ENCODE measurements at regions of chr6 and their contacts with region 1.

Region 1: DNA sequence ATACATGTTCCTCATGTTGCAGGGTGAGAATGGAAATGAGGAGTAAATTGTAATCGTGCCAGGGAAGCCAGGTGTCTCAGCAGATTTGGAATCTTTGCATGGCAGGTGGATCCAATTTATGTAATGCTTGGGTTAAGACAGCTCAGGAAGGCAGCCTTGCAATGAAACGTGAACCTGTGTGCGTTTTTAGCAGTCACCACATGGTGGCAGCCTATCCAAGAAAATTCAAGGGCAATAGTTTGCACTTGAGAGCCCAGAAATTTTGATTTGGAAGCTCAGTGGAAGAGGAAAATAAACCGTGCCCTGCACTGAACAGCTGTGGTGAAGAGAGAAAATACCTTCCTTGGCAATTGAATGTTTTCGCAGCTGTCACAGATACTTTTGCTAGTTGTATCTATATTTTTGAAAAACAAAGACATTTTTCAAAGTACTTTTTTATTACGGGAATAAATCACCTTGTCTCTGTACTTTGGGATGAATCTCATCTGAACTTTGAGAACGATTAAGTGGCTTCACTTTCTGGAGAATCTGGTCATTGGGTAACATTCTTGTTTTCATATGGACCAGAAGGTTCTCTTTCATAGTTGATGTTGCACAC is 26.5 kb downstream of the MTHFD1L start:
- DNase-seq: peak; percentile 77
- H3K4me3 ChIP-seq: no peak overlapping the region
- H3K27ac ChIP-seq: no peak overlapping the region
- H3K4me1 ChIP-seq: peaks cover 0 to 7% (median 2%) of the 10 kb centered on the region in 4 donors
- H3K27me3 ChIP-seq: no peaks in the 10 kb centered on the region
- CTCF ChIP-seq: peak; percentile 73 to 88 (median 85)
- EP300 ChIP-seq: no peak
- POLR2A ChIP-seq: no peak

Region 2: GRCh38 chr6:151014404-151015100 is 122.6 kb after region 1 on chr6:
- in situ Hi-C with region 1: loop called in 1 of 4 experiments (anchors 25 kb)
- intact Hi-C with region 1: no loop called
- DNase-seq: peak; percentile 78
- H3K4me3 ChIP-seq: no peak overlapping the region
- H3K27ac ChIP-seq: peak overlapping the region in 3 of 4 donors; percentile 4 to 45 (median 5)
- H3K4me1 ChIP-seq: peaks cover 0 to 5% (median 2%) of the 10 kb centered on the region in 4 donors
- H3K27me3 ChIP-seq: no peaks in the 10 kb centered on the region
- CTCF ChIP-seq: peak; percentile 96 to 99 (median 98)
- EP300 ChIP-seq: no peak
- POLR2A ChIP-seq: no peak

Region 3: GRCh38 chr6:151060096-151060765 is 168.2 kb after region 1 on chr6:
- in situ Hi-C with region 1: no loop called
- intact Hi-C with region 1: no loop called
- DNase-seq: no peak
- H3K4me3 ChIP-seq: no peak overlapping the region
- H3K27ac ChIP-seq: peak overlapping the region; percentile 32 to 52 (median 42)
- H3K4me1 ChIP-seq: peaks cover 0 to 3% (median 1%) of the 10 kb centered on the region in 4 donors
- H3K27me3 ChIP-seq: no peaks in the 10 kb centered on the region
- CTCF ChIP-seq: no peak
- EP300 ChIP-seq: no peak
- POLR2A ChIP-seq: no peak

Region 4: DNA sequence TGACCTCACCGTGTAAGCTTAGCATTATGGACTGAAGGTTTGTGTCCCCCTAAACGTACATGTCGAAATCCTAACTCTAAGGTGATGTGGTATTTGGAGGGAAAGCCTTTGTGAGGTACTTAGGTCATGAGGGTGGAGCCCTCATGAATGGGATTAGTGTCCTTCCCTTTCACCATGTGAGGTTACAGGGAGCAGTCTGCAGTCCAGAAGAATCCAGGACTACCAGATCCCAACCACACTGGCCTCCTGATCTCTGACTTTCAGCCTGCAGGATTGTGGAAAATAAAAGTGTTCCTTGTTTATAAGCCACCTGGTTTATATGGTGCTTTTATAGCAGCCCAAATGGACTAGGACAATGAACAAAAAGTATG is 426.0 kb after region 1 on chr6:
- in situ Hi-C with region 1: no loop called
- intact Hi-C with region 1: no loop called
- DNase-seq: no peak
- H3K4me3 ChIP-seq: no peak overlapping the region
- H3K27ac ChIP-seq: peak overlapping the region; percentile 64 to 81 (median 73)
- H3K4me1 ChIP-seq: peaks cover 0 to 4% (median 0%) of the 10 kb centered on the region in 4 donors
- H3K27me3 ChIP-seq: no peaks in the 10 kb centered on the region
- CTCF ChIP-seq: no peak
- EP300 ChIP-seq: no peak
- POLR2A ChIP-seq: no peak

Region 5: DNA sequence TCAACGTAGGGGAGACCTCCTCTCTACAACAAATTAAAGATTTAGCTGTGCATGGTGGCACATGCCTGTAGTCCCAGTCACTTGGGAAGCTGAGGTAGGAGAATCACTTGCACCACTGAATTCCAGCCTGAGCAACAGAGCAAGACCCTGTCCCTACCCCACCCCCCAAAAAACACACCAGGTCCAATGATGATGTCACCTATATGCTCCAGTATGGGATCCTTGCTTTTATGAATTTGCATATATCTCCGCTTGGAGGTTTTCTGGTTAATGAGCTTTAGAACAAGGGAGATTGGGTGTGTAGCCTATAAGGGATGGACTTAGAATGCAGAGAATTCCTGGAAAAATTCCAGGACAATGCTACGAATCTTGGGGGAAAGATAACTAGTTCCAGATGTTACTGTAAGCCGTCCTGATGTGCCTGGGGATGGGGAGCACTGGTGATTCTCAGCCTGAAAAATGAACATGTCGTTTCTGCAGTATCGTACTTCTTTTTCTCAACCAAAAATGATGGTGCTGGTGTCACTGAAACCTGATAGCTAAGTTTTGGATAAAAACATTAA is 438.2 kb after region 1 on chr6:
- in situ Hi-C with region 1: loop called (anchors 5 to 10 kb)
- intact Hi-C with region 1: loop called (anchors 5 kb)
- DNase-seq: no peak
- H3K4me3 ChIP-seq: no peak overlapping the region
- H3K27ac ChIP-seq: peak overlapping the region in 2 of 4 donors; percentile 13 to 41
- H3K4me1 ChIP-seq: peaks cover 3 to 8% (median 8%) of the 10 kb centered on the region in 4 donors
- H3K27me3 ChIP-seq: peaks cover 18% of the 10 kb centered on the region
- CTCF ChIP-seq: no peak
- EP300 ChIP-seq: no peak
- POLR2A ChIP-seq: no peak

Region 6: GRCh38 chr6:151339369-151339768 is 447.4 kb after region 1 on chr6:
- in situ Hi-C with region 1: loop called (anchors 5 to 10 kb)
- intact Hi-C with region 1: loop called (anchors 5 kb)
- DNase-seq: no peak
- H3K4me3 ChIP-seq: no peak overlapping the region
- H3K27ac ChIP-seq: no peak overlapping the region
- H3K4me1 ChIP-seq: peaks cover 0 to 5% (median 0%) of the 10 kb centered on the region in 4 donors
- H3K27me3 ChIP-seq: no peaks in the 10 kb centered on the region
- CTCF ChIP-seq: no peak
- EP300 ChIP-seq: no peak
- POLR2A ChIP-seq: no peak

Region 7: DNA sequence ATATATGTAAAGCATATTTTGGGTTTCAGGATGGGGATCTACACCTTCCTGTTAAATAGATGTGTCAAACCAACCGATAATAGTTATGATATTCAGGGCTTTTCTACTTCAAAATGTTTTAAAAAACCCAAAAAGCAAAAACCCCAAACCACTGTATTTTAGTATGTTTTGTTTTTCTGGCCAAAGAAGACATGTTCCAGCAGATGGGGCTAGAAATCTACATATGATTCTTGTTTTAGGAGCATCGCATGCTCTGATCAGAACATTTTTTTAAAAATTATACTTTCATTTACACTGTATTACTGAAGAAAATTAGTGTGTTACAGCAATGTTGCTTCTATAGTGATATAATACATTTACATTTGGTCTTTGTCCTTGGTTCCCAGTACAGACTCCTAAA is 548.9 kb after region 1 on chr6:
- in situ Hi-C with region 1: no loop called
- intact Hi-C with region 1: no loop called
- DNase-seq: no peak
- H3K4me3 ChIP-seq: no peak overlapping the region
- H3K27ac ChIP-seq: no peak overlapping the region
- H3K4me1 ChIP-seq: peaks cover 0 to 36% (median 6%) of the 10 kb centered on the region in 4 donors
- H3K27me3 ChIP-seq: no peaks in the 10 kb centered on the region
- CTCF ChIP-seq: peak in 2 of 5 experiments; percentile 13 to 20
- EP300 ChIP-seq: no peak
- POLR2A ChIP-seq: no peak

Region 8: DNA sequence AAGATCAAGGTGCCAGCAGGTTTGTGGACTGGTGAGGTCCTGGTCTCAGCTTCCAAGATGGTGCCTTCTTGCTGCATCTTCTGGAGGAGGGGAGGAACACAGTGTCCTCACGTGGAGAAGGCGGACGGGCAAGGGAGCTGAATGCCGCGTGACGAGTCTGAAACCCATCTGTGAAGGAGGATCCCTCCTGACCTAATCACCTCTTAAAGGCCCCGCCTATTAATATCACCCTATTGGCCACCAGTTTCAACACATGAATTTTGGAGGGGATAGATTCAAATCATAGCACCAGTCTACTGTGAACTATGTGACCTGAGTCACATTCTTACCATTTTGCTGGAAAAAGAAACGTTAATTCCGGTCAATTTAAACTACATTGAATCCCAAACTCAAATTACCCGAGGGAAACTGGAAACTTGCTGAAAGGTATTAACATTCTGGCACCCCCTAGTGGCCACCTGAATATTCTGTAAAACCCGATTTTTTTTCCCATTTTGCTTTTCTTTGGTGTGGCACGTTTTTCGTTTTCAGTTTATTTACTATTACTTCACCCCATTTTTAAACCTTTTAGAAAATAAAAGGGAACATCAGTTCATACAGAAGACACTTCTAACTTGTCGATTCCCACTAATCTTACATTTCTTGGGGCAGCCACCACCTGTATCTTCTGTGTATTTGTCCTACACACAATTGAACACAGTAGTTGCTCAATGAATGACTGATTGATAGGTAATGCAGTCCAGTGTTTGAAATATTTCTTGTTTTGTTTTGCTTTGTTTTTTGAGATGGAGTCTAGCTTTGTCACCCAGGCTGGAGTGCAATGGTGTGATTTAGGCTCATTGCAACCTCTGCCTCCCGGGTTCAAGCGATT is 583.9 kb after region 1 on chr6:
- in situ Hi-C with region 1: no loop called
- intact Hi-C with region 1: loop called (anchors 5 kb)
- DNase-seq: peak; percentile 30
- H3K4me3 ChIP-seq: no peak overlapping the region
- H3K27ac ChIP-seq: no peak overlapping the region
- H3K4me1 ChIP-seq: no peaks in the 10 kb centered on the region
- H3K27me3 ChIP-seq: no peaks in the 10 kb centered on the region
- CTCF ChIP-seq: peak; percentile 54 to 86 (median 66)
- EP300 ChIP-seq: no peak
- POLR2A ChIP-seq: no peak